ENCODE measurements at regions of chr12 and their contacts with region 1.

Region 1: DNA sequence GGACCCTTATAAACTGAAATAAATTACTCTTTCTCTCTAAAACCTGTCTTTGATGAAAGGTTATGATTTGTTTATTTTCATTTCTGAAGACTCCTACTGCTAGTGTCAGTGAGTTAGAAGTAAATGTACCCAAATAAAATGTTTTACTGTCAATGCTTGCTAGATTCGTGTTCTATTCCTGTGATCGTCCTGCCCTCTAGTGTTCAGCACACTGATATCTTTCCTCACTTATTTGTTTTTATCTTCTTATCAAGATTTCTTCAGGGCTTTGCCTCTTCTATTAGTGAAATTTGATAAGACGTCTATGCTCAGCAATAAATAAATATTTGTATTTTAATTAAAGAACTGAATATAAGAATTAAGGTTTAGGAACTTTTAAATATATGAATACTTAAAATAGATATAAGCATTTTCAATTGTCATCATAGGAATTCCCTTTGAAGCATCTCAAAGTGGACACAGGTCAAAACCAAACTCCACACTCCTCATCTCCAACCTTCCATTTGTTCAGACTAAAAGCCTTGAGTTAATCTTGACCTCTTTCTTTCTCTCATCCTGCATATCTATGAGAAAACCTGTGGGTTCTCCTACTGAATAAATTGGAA is 75.8 kb downstream of the C12orf50 start:
- DNase-seq: peak; percentile 41
- ATAC-seq: peak; percentile 61
- H3K4me3 ChIP-seq: no peak overlapping the region
- H3K27ac ChIP-seq: no peak overlapping the region
- H3K4me1 ChIP-seq: no peaks in the 10 kb centered on the region
- H3K27me3 ChIP-seq: no peaks in the 10 kb centered on the region
- CTCF ChIP-seq: peak; percentile 55 to 73 (median 55); a peak in 5 of 6 replicates
- POLR2A ChIP-seq: no peak
- RAD21 ChIP-seq: peak; percentile 75

Region 2: DNA sequence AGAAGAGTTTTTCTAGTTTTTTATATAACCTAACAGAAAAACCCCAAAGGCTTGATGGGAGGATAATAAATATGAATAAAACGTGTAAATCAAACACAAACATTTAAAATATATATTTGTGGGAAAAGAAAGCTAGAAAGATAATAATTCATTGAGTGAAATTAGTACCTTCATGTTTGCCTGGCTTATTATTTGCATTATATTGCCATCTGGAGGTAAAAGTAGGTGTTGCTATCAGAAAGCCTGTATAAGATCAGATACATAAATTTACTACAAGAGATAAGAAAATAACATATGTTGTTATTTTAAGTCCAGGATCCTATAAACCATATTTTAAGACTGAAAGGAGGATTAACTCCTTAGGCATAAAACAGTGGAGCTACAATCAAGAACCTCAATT is 2001.5 kb before region 1 on chr12:
- CTCF ChIA-PET with region 1: no interaction called
- POLR2A ChIA-PET with region 1: no interaction called
- RAD21 ChIA-PET with region 1: no interaction called
- intact Hi-C with region 1: loop called (anchors 10 kb)
- DNase-seq: peak; percentile 19
- ATAC-seq: no peak
- H3K4me3 ChIP-seq: no peak overlapping the region
- H3K27ac ChIP-seq: no peak overlapping the region
- H3K4me1 ChIP-seq: no peaks in the 10 kb centered on the region
- H3K27me3 ChIP-seq: no peaks in the 10 kb centered on the region
- CTCF ChIP-seq: peak; percentile 34 to 64 (median 40); a peak in 4 of 6 replicates
- POLR2A ChIP-seq: no peak
- RAD21 ChIP-seq: peak; percentile 65

Region 3: GRCh38 chr12:87274594-87275245 is 678.6 kb before region 1 on chr12:
- CTCF ChIA-PET with region 1: no interaction called
- POLR2A ChIA-PET with region 1: no interaction called
- RAD21 ChIA-PET with region 1: no interaction called
- intact Hi-C with region 1: loop called (anchors 5 kb)
- DNase-seq: peak; percentile 19
- ATAC-seq: peak; percentile 77
- H3K4me3 ChIP-seq: no peak overlapping the region
- H3K27ac ChIP-seq: no peak overlapping the region
- H3K4me1 ChIP-seq: no peaks in the 10 kb centered on the region
- H3K27me3 ChIP-seq: no peaks in the 10 kb centered on the region
- CTCF ChIP-seq: peak; percentile 26 to 74 (median 67); a peak in 5 of 6 replicates
- POLR2A ChIP-seq: no peak
- RAD21 ChIP-seq: peak; percentile 50

Region 4: DNA sequence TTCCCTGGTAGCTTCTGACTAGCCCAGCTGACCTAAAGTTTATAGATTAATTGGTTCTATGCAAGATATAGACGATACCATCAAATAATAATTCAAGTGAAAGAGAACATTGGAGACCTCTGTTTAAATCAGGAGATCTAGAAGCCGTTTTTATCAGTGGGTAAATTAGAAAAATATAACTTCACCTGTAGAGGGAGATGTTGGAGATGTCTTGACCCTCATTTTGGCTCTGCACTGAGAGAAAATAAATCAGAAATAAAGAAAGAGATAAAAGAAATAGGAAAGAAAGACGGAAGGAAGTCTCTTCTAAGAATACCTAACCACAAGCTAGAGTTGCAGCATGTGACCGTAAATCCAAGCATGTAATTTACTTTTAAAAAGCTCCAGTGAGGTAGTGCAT is 608.7 kb before region 1 on chr12:
- CTCF ChIA-PET with region 1: no interaction called
- POLR2A ChIA-PET with region 1: no interaction called
- RAD21 ChIA-PET with region 1: no interaction called
- intact Hi-C with region 1: loop called (anchors 2 kb)
- DNase-seq: no peak
- ATAC-seq: peak; percentile 38; the same call in 1 of the 2 replicates
- H3K4me3 ChIP-seq: no peak overlapping the region
- H3K27ac ChIP-seq: no peak overlapping the region
- H3K4me1 ChIP-seq: no peaks in the 10 kb centered on the region
- H3K27me3 ChIP-seq: no peaks in the 10 kb centered on the region
- CTCF ChIP-seq: peak; percentile 27 to 50 (median 37); a peak in 4 of 6 replicates
- POLR2A ChIP-seq: no peak
- RAD21 ChIP-seq: peak; percentile 64

Measured in HCT116 (cell line).